CD8-positive, alpha-beta T cell (primary cell): ENCODE measurements at regions of chr19 and their contacts with region 1.

Region 1: GRCh38 chr19:9621156-9622037 is at the start of gene ZNF561:
- DNase-seq: peak; percentile 77 to 97 (median 91)
- ATAC-seq: peak; percentile 85
- H3K4me3 ChIP-seq: peak within 1 kb of the TSS; percentile 81 to 97
- H3K4me3 Mint-ChIP-seq: peak within 1 kb of the TSS; percentile 95
- H3K27ac ChIP-seq: peak within 1 kb of the TSS; percentile 91 to 94
- H3K27ac Mint-ChIP-seq: peak within 1 kb of the TSS; percentile 99
- H3K4me1 ChIP-seq: peaks cover 15% of the 10 kb centered on the region
- H3K4me1 Mint-ChIP-seq: peaks cover 27% of the 10 kb centered on the region
- H3K27me3 ChIP-seq: no peaks in the 10 kb centered on the region
- H3K27me3 Mint-ChIP-seq: no peaks in the 10 kb centered on the region
- CTCF ChIP-seq: no peak
- total RNA-seq, gene ZNF561: 35.5 to 39.8 TPM

Region 2: GRCh38 chr19:9329999-9330398 is 291.4 kb before region 1 on chr19:
- CTCF ChIA-PET with region 1: no interaction called
- POLR2A ChIA-PET with region 1: no interaction called
- intact Hi-C with region 1: loop called in 1 of 2 experiments (anchors 5 kb)
- DNase-seq: no peak
- ATAC-seq: no peak
- H3K4me3 ChIP-seq: no peak overlapping the region
- H3K4me3 Mint-ChIP-seq: no peak overlapping the region
- H3K27ac ChIP-seq: no peak overlapping the region
- H3K27ac Mint-ChIP-seq: no peak overlapping the region
- H3K4me1 ChIP-seq: peaks cover 2% of the 10 kb centered on the region
- H3K4me1 Mint-ChIP-seq: peaks cover 17% of the 10 kb centered on the region
- H3K27me3 ChIP-seq: no peaks in the 10 kb centered on the region
- H3K27me3 Mint-ChIP-seq: no peaks in the 10 kb centered on the region
- CTCF ChIP-seq: no peak

Region 3: GRCh38 chr19:9552536-9553274 is 68.7 kb before region 1 on chr19:
- CTCF ChIA-PET with region 1: no interaction called
- POLR2A ChIA-PET with region 1: no interaction called
- intact Hi-C with region 1: no loop called
- DNase-seq: no peak
- ATAC-seq: no peak
- H3K4me3 ChIP-seq: no peak overlapping the region
- H3K4me3 Mint-ChIP-seq: no peak overlapping the region
- H3K27ac ChIP-seq: no peak overlapping the region
- H3K27ac Mint-ChIP-seq: no peak overlapping the region
- H3K4me1 ChIP-seq: no peaks in the 10 kb centered on the region
- H3K4me1 Mint-ChIP-seq: no peaks in the 10 kb centered on the region
- H3K27me3 ChIP-seq: no peaks in the 10 kb centered on the region
- H3K27me3 Mint-ChIP-seq: peaks cover 3% of the 10 kb centered on the region
- CTCF ChIP-seq: no peak

Region 4: DNA sequence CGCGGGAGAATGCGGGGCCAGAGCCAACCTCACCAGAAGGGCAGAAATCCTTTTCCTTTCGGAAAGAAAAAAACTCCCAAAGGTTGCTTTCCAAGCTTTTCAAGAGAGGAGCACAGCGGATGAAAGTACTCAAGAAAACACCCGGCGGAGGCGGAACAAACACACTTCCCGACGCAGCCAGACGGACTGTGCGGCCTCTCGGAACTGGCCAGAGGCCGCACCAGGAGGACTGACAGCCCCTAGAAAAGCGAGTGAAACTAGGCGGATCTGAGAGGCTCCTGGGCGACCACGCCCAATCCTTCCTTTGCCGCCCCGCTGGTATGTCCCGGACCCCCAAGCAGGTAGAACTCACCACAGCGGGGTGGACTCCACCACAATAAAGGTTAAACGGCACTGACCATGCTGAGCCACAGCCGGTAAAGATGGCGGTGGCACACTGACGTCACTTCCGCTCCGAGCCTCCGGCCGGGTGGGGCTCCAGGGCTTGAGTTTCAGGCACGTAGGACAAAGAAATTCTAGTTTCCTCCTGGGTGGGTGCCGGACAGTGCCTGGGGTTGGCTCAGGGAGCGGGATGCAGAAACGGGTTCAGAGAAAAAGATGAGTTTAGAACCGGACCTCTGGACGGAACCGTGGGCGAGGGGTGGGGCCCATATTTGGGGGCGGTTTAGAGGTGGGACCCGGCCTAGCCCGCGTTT is 53.4 kb after region 1 on chr19 and contains the start of gene ZNF562:
- CTCF ChIA-PET with region 1: no interaction called
- POLR2A ChIA-PET with region 1: no interaction called
- intact Hi-C with region 1: loop called (anchors 1 kb)
- DNase-seq: peak; percentile 60 to 89 (median 81)
- ATAC-seq: peak; percentile 81
- H3K4me3 ChIP-seq: peak within 1 kb of the TSS; percentile 65 to 90
- H3K4me3 Mint-ChIP-seq: peak within 1 kb of the TSS; percentile 97
- H3K27ac ChIP-seq: peak within 1 kb of the TSS; percentile 80 to 84
- H3K27ac Mint-ChIP-seq: peak within 1 kb of the TSS; percentile 99
- H3K4me1 ChIP-seq: no peaks in the 10 kb centered on the region
- H3K4me1 Mint-ChIP-seq: peaks cover 23% of the 10 kb centered on the region
- H3K27me3 ChIP-seq: no peaks in the 10 kb centered on the region
- H3K27me3 Mint-ChIP-seq: no peaks in the 10 kb centered on the region
- CTCF ChIP-seq: no peak
- total RNA-seq, gene ZNF562: 13.6 to 16.5 TPM

Region 5: GRCh38 chr19:9768175-9769112 is 147.0 kb after region 1 on chr19 and contains the start of gene ZNF846:
- CTCF ChIA-PET with region 1: interaction called, 11 read pairs
- POLR2A ChIA-PET with region 1: interaction called, 3 read pairs
- intact Hi-C with region 1: loop called (anchors 1 kb)
- DNase-seq: peak; percentile 83 to 96 (median 93)
- ATAC-seq: peak; percentile 95
- H3K4me3 ChIP-seq: peak within 1 kb of the TSS; percentile 94 to 96
- H3K4me3 Mint-ChIP-seq: peak within 1 kb of the TSS; percentile 97
- H3K27ac ChIP-seq: peak within 1 kb of the TSS; percentile 87 to 99
- H3K27ac Mint-ChIP-seq: peak within 1 kb of the TSS; percentile 99
- H3K4me1 ChIP-seq: peaks cover 8% of the 10 kb centered on the region
- H3K4me1 Mint-ChIP-seq: peaks cover 16% of the 10 kb centered on the region
- H3K27me3 ChIP-seq: no peaks in the 10 kb centered on the region
- H3K27me3 Mint-ChIP-seq: no peaks in the 10 kb centered on the region
- CTCF ChIP-seq: no peak
- total RNA-seq, gene ZNF846: 6.4 to 8.2 TPM

Region 6: DNA sequence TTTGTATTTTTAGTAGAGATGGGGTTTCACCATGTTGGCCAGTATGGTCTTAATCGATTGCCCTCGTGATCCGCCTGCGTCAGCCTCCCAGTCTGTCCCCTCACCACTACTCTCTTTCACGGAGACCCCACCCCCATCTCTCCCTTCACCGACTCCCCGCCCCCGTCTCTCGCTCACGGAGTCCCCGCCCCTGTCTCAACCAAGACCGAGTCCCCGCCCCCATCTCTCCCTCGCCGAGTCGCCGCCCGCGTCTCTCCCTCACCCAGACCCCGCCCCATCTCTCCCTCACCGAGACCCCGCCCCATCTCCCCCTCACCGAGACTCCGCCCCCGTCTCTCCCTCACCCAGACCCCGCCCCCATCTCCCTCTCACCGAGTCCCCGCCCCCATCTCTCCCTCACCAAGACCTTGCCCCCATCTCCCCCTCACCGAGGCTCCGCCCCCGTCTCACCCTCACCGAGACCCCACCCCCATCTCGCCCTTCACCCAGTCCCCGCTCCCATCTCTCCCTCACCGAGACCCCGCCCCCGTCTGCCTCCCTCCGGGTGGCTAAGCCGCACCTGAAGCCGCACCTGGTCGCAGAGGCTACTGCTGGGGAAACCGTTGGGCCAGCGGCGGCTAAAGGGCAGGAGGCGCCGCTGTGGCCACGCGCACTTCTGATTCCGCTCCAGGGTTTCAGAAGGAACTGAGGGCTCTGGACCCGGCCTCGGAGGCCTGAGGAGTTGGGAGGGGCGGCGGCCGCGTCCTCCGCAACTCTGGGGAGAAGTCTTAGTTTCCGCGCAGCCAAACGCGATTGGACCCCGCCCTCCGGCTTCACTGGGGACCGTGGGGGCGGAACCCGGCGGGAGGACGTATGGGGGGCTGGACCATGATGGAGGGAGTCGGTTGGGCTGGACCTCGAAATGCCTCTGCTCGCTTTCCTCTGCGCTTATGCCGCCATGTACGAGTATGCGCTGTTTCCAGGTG is 164.3 kb after region 1 on chr19:
- CTCF ChIA-PET with region 1: interaction called, 5 read pairs
- POLR2A ChIA-PET with region 1: no interaction called
- intact Hi-C with region 1: loop called in 1 of 2 experiments (anchors 1 kb)
- DNase-seq: peak; percentile 90 to 98 (median 97)
- ATAC-seq: peak; percentile 82
- H3K4me3 ChIP-seq: peak overlapping the region; percentile 95 to 97
- H3K4me3 Mint-ChIP-seq: peak overlapping the region; percentile 88
- H3K27ac ChIP-seq: peak overlapping the region; percentile 87 to 98
- H3K27ac Mint-ChIP-seq: peak overlapping the region; percentile 95
- H3K4me1 ChIP-seq: peaks cover 10% of the 10 kb centered on the region
- H3K4me1 Mint-ChIP-seq: peaks cover 29% of the 10 kb centered on the region
- H3K27me3 ChIP-seq: no peaks in the 10 kb centered on the region
- H3K27me3 Mint-ChIP-seq: no peaks in the 10 kb centered on the region
- CTCF ChIP-seq: no peak

Region 7: GRCh38 chr19:9827289-9828238 is 206.2 kb after region 1 on chr19 and contains the start of gene UBL5:
- CTCF ChIA-PET with region 1: no interaction called
- POLR2A ChIA-PET with region 1: no interaction called
- intact Hi-C with region 1: loop called in 1 of 2 experiments (anchors 1 kb)
- DNase-seq: peak; percentile 77 to 95 (median 90)
- ATAC-seq: peak; percentile 94
- H3K4me3 ChIP-seq: peak within 1 kb of the TSS; percentile 87 to 89
- H3K4me3 Mint-ChIP-seq: peak within 1 kb of the TSS; percentile 100
- H3K27ac ChIP-seq: peak within 1 kb of the TSS; percentile 65 to 87
- H3K27ac Mint-ChIP-seq: peak within 1 kb of the TSS; percentile 99
- H3K4me1 ChIP-seq: peaks cover 17% of the 10 kb centered on the region
- H3K4me1 Mint-ChIP-seq: peaks cover 34% of the 10 kb centered on the region
- H3K27me3 ChIP-seq: no peaks in the 10 kb centered on the region
- H3K27me3 Mint-ChIP-seq: no peaks in the 10 kb centered on the region
- CTCF ChIP-seq: no peak
- total RNA-seq, gene UBL5: 161 to 173 TPM

Region 8: DNA sequence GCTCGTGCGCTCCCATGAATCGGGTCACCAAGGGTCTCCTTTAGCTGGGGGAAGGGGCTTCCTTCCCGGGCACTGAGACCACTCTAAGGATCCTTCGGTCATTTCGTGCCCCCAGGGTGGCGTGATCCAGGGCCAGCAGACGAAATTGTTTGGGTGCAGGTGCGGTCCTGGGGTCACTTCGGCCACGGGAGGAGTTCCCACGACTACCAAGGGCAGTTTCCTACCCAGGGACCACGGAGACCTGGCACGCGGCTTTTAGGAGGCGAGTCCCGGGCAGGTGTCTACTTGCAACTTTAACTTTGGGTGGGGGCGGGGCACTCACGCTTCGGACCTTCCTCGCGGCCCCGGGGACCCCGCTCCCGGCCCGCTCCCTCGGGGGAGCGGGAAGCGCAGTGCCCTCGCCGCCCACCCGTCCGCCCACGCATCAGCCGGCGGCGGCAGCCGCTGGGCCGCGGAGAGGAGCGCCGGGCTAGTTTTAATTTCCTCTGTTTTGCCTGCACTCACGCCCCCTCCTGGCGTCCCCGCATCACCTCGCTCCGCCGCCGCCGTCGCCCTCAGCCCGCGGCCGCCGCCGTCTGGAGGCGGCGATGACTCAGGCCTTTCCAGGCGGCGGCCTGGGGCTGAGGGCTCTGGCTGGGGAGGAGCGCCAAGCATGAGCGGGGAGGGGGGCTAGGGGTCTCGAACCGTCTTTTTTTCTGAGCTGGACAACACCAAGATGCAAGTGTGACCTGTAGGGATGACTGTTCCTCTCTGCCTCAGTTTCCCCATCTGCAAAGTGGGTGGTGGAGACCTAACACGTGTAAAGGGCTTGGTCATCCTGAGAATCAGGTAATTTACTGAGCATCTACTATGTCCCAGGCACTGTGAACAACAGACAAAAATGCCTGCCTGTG is 293.2 kb after region 1 on chr19:
- CTCF ChIA-PET with region 1: no interaction called
- POLR2A ChIA-PET with region 1: no interaction called
- intact Hi-C with region 1: loop called (anchors 1 kb)
- DNase-seq: peak; percentile 69 to 89 (median 81)
- ATAC-seq: peak; percentile 92
- H3K4me3 ChIP-seq: peak overlapping the region; percentile 49 to 66
- H3K4me3 Mint-ChIP-seq: peak overlapping the region; percentile 73
- H3K27ac ChIP-seq: no peak overlapping the region
- H3K27ac Mint-ChIP-seq: no peak overlapping the region
- H3K4me1 ChIP-seq: peaks cover 15% of the 10 kb centered on the region
- H3K4me1 Mint-ChIP-seq: peaks cover 8% of the 10 kb centered on the region
- H3K27me3 ChIP-seq: peaks cover 0 to 15% of the 10 kb centered on the region in 2 experiments
- H3K27me3 Mint-ChIP-seq: peaks cover 30% of the 10 kb centered on the region
- CTCF ChIP-seq: peak; percentile 73